ENCODE measurements at regions of chr18 and their contacts with region 1.

Region 1: GRCh38 chr18:23503038-23503962 is at the start of gene RMC1:
- DNase-seq: peak; percentile 66
- ATAC-seq: peak; percentile 86
- H3K4me3 ChIP-seq: peak within 1 kb of the TSS; percentile 96
- H3K27ac ChIP-seq: peak within 1 kb of the TSS; percentile 94
- H3K4me1 ChIP-seq: peaks cover 18% of the 10 kb centered on the region
- H3K27me3 ChIP-seq: no peaks in the 10 kb centered on the region
- CTCF ChIP-seq: peak; percentile 20 to 38 (median 37); a peak in 5 of 6 replicates
- EP300 ChIP-seq: peak in 1 of 2 experiments; percentile 31; a peak in 1 of 4 replicates
- POLR2A ChIP-seq: peak; percentile 93
- RAD21 ChIP-seq: peak; percentile 41; the same call in 1 of the 2 replicates
- polyA plus RNA-seq, gene RMC1: 8.4 to 25.7 TPM

Region 2: GRCh38 chr18:22789600-22789999 is 713.7 kb before region 1 on chr18:
- CTCF ChIA-PET with region 1: no interaction called
- POLR2A ChIA-PET with region 1: no interaction called
- RAD21 ChIA-PET with region 1: no interaction called
- SMC1A ChIA-PET with region 1: no interaction called
- in situ Hi-C with region 1: no loop called
- intact Hi-C with region 1: loop called (anchors 10 kb)
- DNase-seq: no peak
- ATAC-seq: no peak
- H3K4me3 ChIP-seq: no peak overlapping the region
- H3K27ac ChIP-seq: no peak overlapping the region
- H3K4me1 ChIP-seq: no peaks in the 10 kb centered on the region
- H3K27me3 ChIP-seq: no peaks in the 10 kb centered on the region; a peak in 1 of 4 replicates
- CTCF ChIP-seq: no peak
- EP300 ChIP-seq: no peak
- POLR2A ChIP-seq: no peak
- RAD21 ChIP-seq: no peak

Region 3: DNA sequence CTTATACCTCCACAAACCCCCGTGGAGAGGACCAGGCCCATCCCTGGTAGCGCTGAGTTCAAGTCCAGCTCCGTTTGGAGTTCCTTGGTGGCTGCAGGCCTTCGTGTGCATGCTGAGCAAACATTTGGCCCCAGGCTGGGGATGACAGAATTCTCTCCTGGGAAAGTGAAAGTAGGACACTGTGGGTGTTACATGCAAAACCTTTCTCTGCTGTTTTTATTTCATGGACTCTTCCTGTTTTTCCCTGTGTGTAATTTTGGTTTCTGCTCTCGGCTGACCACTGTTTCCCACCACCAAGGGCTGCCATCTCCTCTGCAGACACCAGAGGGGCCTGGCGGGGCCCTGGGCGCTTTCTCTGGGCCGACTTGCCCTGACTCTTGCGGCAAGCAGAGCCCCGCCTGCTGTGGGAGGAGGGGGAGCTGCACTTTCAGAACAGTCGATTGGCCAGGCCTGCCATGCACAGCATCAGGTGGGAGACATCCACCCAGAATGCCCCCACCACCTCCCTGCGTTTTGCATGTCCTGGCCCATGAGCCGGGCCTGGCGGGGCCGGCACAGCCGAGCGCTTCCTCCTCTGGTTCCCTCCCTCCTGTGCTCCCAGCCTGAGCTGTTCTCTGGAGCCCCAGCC is 265.7 kb before region 1 on chr18:
- CTCF ChIA-PET with region 1: no interaction called
- POLR2A ChIA-PET with region 1: interaction called, 3 read pairs
- RAD21 ChIA-PET with region 1: interaction called, 3 read pairs
- SMC1A ChIA-PET with region 1: no interaction called
- in situ Hi-C with region 1: no loop called
- intact Hi-C with region 1: loop called (anchors 5 kb)
- DNase-seq: peak; percentile 81
- ATAC-seq: peak; percentile 86
- H3K4me3 ChIP-seq: no peak overlapping the region
- H3K27ac ChIP-seq: peak overlapping the region; percentile 76
- H3K4me1 ChIP-seq: peaks cover 50% of the 10 kb centered on the region
- H3K27me3 ChIP-seq: no peaks in the 10 kb centered on the region
- CTCF ChIP-seq: peak; percentile 21 to 55 (median 45); a peak in 4 of 6 replicates
- EP300 ChIP-seq: peak; percentile 56 to 87; a peak in 3 of 4 replicates
- POLR2A ChIP-seq: no peak
- RAD21 ChIP-seq: peak; percentile 63

Region 4: GRCh38 chr18:23384778-23385736 is 118.2 kb before region 1 on chr18:
- CTCF ChIA-PET with region 1: no interaction called
- POLR2A ChIA-PET with region 1: no interaction called
- RAD21 ChIA-PET with region 1: no interaction called
- SMC1A ChIA-PET with region 1: no interaction called
- in situ Hi-C with region 1: no loop called
- intact Hi-C with region 1: no loop called
- DNase-seq: no peak
- ATAC-seq: no peak
- H3K4me3 ChIP-seq: no peak overlapping the region
- H3K27ac ChIP-seq: no peak overlapping the region
- H3K4me1 ChIP-seq: no peaks in the 10 kb centered on the region
- H3K27me3 ChIP-seq: no peaks in the 10 kb centered on the region
- CTCF ChIP-seq: no peak
- EP300 ChIP-seq: no peak
- POLR2A ChIP-seq: no peak
- RAD21 ChIP-seq: no peak

Region 5: GRCh38 chr18:23452728-23453679 is 50.3 kb before region 1 on chr18 and contains the start of gene RIOK3:
- CTCF ChIA-PET with region 1: interaction called, 19 read pairs
- POLR2A ChIA-PET with region 1: interaction called, 14 read pairs
- RAD21 ChIA-PET with region 1: interaction called, 11 read pairs
- SMC1A ChIA-PET with region 1: interaction called, 18 read pairs
- in situ Hi-C with region 1: no loop called
- intact Hi-C with region 1: loop called (anchors 5 kb)
- DNase-seq: peak; percentile 86
- ATAC-seq: peak; percentile 97
- H3K4me3 ChIP-seq: peak within 1 kb of the TSS; percentile 84
- H3K27ac ChIP-seq: peak within 1 kb of the TSS; percentile 78
- H3K4me1 ChIP-seq: peaks cover 14% of the 10 kb centered on the region
- H3K27me3 ChIP-seq: no peaks in the 10 kb centered on the region
- CTCF ChIP-seq: no peak
- EP300 ChIP-seq: no peak
- POLR2A ChIP-seq: peak; percentile 99
- RAD21 ChIP-seq: no peak
- polyA plus RNA-seq, gene RIOK3: 18.0 to 28.1 TPM

Region 6: GRCh38 chr18:23487738-23488570 is 15.3 kb before region 1 on chr18:
- CTCF ChIA-PET with region 1: interaction called, 72 read pairs
- POLR2A ChIA-PET with region 1: interaction called, 8 read pairs
- RAD21 ChIA-PET with region 1: interaction called, 22 read pairs
- SMC1A ChIA-PET with region 1: interaction called, 28 read pairs
- in situ Hi-C with region 1: no loop called
- intact Hi-C with region 1: no loop called
- DNase-seq: peak; percentile 62
- ATAC-seq: peak; percentile 92
- H3K4me3 ChIP-seq: peak overlapping the region; percentile 70
- H3K27ac ChIP-seq: peak overlapping the region; percentile 93
- H3K4me1 ChIP-seq: peaks cover 10% of the 10 kb centered on the region
- H3K27me3 ChIP-seq: no peaks in the 10 kb centered on the region
- CTCF ChIP-seq: no peak
- EP300 ChIP-seq: no peak
- POLR2A ChIP-seq: peak; percentile 43
- RAD21 ChIP-seq: no peak

Region 7: DNA sequence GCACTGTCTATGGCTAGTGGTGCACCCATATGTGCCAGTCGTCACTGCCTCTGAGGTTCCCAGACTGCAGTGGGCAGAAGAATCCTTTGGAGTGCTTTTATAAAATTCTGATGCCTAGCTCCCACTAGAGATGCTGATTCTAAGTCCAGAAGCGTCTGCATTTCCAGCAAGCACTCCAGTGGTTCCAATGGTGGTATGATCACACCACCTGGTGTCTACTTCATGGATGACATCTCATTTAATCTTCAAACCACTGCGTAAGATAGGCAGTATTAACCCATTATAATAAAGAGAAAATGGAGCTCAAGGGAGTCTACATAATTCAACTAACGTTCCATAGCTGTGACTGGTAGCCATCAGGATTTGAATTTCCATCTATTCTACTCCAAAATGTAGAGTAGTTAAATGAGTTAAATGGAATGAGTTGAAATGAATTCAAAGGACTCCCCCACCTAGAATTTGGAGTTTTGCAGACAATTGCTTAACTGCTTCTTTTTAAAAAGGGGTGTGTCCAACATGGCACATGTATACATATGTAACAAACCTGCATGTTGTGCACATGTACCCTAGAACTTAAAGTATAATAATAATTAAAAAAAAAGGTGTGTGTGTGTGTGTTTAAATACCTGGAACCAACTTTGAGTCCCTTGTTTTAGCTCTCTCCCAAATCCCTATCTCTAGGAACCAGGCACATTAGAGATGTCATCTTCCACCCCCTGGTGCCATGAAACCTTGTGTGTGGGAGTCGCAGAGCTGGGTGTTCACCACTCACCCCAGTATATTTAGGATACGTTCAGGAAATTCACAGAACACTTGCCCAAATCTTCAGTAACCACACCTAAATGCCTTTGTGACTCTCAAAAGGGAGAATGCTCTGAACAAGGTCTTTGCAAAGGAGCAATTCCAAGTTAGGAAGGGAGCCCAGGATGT is 200.0 kb after region 1 on chr18:
- CTCF ChIA-PET with region 1: interaction called, 20 read pairs
- POLR2A ChIA-PET with region 1: no interaction called
- RAD21 ChIA-PET with region 1: interaction called, 7 read pairs
- SMC1A ChIA-PET with region 1: interaction called, 9 read pairs
- in situ Hi-C with region 1: no loop called
- intact Hi-C with region 1: loop called (anchors 5 kb)
- DNase-seq: no peak
- ATAC-seq: peak; percentile 92
- H3K4me3 ChIP-seq: no peak overlapping the region
- H3K27ac ChIP-seq: no peak overlapping the region
- H3K4me1 ChIP-seq: no peaks in the 10 kb centered on the region
- H3K27me3 ChIP-seq: no peaks in the 10 kb centered on the region
- CTCF ChIP-seq: peak; percentile 35 to 79 (median 41); a peak in 5 of 6 replicates
- EP300 ChIP-seq: no peak
- POLR2A ChIP-seq: no peak
- RAD21 ChIP-seq: peak; percentile 95

Measured in GM12878 (cell line).